Natural killer cell (primary cell): ENCODE measurements at regions of chrX and their contacts with region 1.

Region 1: GRCh38 chrX:12955882-12956703 is 18.8 kb upstream of the TMSB4X start:
- DNase-seq: peak; percentile 64 to 77
- ATAC-seq: peak; percentile 54 to 73 (median 67)
- H3K4me3 ChIP-seq: peak overlapping the region; percentile 42
- H3K4me3 Mint-ChIP-seq: peak overlapping the region; percentile 87
- H3K27ac ChIP-seq: peak overlapping the region; percentile 99
- H3K27ac Mint-ChIP-seq: peak overlapping the region; percentile 95 to 96
- H3K4me1 ChIP-seq: peaks cover 85% of the 10 kb centered on the region
- H3K4me1 Mint-ChIP-seq: peaks cover 65 to 66% of the 10 kb centered on the region in 2 donors
- H3K27me3 ChIP-seq: no peaks in the 10 kb centered on the region
- H3K27me3 Mint-ChIP-seq: no peaks in the 10 kb centered on the region
- CTCF ChIP-seq: no peak

Region 2: GRCh38 chrX:12974796-12975669 is 18.9 kb after region 1 on chrX and contains the start of gene TMSB4X:
- intact Hi-C with region 1: loop called (anchors 1 kb)
- DNase-seq: peak; percentile 79 to 88
- ATAC-seq: peak; percentile 58 to 84 (median 72)
- H3K4me3 ChIP-seq: peak within 1 kb of the TSS; percentile 94
- H3K4me3 Mint-ChIP-seq: peak within 1 kb of the TSS; percentile 95
- H3K27ac ChIP-seq: peak within 1 kb of the TSS; percentile 89
- H3K27ac Mint-ChIP-seq: peak within 1 kb of the TSS; percentile 94 to 97
- H3K4me1 ChIP-seq: peaks cover 41% of the 10 kb centered on the region
- H3K4me1 Mint-ChIP-seq: peaks cover 56 to 79% of the 10 kb centered on the region in 2 donors
- H3K27me3 ChIP-seq: no peaks in the 10 kb centered on the region
- H3K27me3 Mint-ChIP-seq: no peaks in the 10 kb centered on the region
- CTCF ChIP-seq: no peak
- total RNA-seq, gene TMSB4X: 5,049 to 6,005 (median 5,892) TPM

Region 3: GRCh38 chrX:13131396-13132137 is 175.5 kb after region 1 on chrX:
- intact Hi-C with region 1: loop called (anchors 5 kb)
- DNase-seq: peak in 1 of 2 donors; percentile 48
- ATAC-seq: peak; percentile 80 to 99 (median 87)
- H3K4me3 ChIP-seq: no peak overlapping the region
- H3K4me3 Mint-ChIP-seq: peak overlapping the region; percentile 67
- H3K27ac ChIP-seq: peak overlapping the region; percentile 13
- H3K27ac Mint-ChIP-seq: peak overlapping the region; percentile 78 to 80
- H3K4me1 ChIP-seq: peaks cover 4% of the 10 kb centered on the region
- H3K4me1 Mint-ChIP-seq: peaks cover 8 to 27% of the 10 kb centered on the region in 2 donors
- H3K27me3 ChIP-seq: no peaks in the 10 kb centered on the region
- H3K27me3 Mint-ChIP-seq: peaks cover 0 to 25% of the 10 kb centered on the region in 2 donors
- CTCF ChIP-seq: no peak